Heart right ventricle (tissue), 16 donors: ENCODE measurements at regions of chr12 and their contacts with region 1.

Region 1: GRCh38 chr12:8823565-8824300 is 1.3 kb downstream of the A2ML1 start:
- DNase-seq: peak in 1 of 2 donors; percentile 9
- ATAC-seq: peak in 5 of 8 donors; percentile 34 to 67 (median 51)
- H3K4me3 ChIP-seq: no peak overlapping the region
- H3K27ac ChIP-seq: no peak overlapping the region
- H3K4me1 ChIP-seq: no peaks in the 10 kb centered on the region
- H3K27me3 ChIP-seq: no peaks in the 10 kb centered on the region
- CTCF ChIP-seq: peak in 8 of 9 donors; percentile 40 to 70 (median 59)

Region 2: DNA sequence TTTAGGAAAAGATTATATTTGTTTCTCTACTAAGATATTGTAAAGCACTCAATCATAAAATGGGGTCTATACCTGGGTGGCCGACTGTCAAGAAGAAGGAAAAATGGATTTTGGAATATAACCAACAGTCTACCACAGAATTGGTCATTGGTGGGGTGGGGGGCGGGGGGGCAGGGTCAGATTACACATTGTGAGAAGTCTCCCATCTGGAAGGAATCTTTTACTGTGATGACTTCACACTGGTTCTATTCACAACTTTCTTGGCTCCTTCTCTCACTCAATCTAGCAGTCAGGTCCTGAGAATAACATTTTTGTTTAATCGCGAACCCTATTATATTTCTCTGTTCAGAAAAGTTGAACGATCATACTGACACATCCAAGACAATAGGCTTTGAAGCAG is 274.4 kb before region 1 on chr12:
- intact Hi-C with region 1: loop called in 1 of 10 experiments (anchors 5 kb)
- DNase-seq: no peak
- ATAC-seq: no peak
- H3K4me3 ChIP-seq: no peak overlapping the region
- H3K27ac ChIP-seq: no peak overlapping the region
- H3K4me1 ChIP-seq: peaks cover 0 to 5% (median 0%) of the 10 kb centered on the region in 9 donors
- H3K27me3 ChIP-seq: peaks cover 0 to 5% (median 0%) of the 10 kb centered on the region in 7 donors
- CTCF ChIP-seq: no peak

Region 3: DNA sequence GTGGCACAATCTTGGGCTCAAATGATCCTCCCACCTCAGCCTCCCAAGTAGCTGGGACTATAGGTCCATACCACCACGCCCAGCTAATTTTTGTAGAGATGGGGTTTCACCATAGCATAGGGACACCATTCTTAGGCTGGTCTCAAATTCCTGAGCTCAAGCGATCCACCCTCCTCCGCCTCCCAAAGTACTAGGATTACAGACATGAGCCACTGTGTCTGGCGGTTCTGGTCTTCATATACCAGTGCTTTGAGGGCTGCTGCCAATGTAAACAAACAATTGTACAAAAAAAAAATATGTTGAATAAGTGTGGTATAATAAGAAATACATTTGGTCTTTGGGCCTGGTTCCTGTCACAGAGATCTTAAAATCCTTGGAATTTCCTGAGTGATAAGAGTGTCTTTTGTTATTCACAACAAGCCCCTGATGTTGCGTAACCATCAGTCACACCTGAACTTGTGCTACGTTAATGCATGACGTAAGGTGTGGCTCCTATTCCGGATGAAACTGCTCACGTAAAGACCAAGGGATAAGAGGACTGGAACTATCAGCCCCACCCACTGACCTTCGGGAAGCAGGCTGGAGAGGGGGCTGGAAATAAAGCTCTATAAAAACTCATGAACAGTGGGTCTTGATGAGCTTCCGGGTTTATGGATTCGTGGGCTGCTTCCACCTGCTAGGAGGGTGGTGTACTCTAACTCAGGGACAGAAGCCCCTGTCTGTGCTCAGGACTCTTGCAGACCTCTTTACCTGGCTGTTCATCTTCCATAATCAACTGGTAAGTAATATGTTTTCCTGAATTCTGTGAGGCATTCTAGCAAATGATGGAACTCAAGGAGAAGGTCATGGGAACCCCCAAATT is 142.5 kb before region 1 on chr12:
- intact Hi-C with region 1: loop called in 5 of 10 experiments (anchors 1 to 10 kb)
- DNase-seq: peak in 1 of 2 donors; percentile 32
- ATAC-seq: peak; percentile 27 to 91 (median 79)
- H3K4me3 ChIP-seq: peak overlapping the region in 4 of 10 donors; percentile 16 to 28 (median 24)
- H3K27ac ChIP-seq: peak overlapping the region in 9 of 10 donors; percentile 20 to 75 (median 61)
- H3K4me1 ChIP-seq: peaks cover 0 to 25% (median 6%) of the 10 kb centered on the region in 9 donors
- H3K27me3 ChIP-seq: no peaks in the 10 kb centered on the region
- CTCF ChIP-seq: no peak

Region 4: DNA sequence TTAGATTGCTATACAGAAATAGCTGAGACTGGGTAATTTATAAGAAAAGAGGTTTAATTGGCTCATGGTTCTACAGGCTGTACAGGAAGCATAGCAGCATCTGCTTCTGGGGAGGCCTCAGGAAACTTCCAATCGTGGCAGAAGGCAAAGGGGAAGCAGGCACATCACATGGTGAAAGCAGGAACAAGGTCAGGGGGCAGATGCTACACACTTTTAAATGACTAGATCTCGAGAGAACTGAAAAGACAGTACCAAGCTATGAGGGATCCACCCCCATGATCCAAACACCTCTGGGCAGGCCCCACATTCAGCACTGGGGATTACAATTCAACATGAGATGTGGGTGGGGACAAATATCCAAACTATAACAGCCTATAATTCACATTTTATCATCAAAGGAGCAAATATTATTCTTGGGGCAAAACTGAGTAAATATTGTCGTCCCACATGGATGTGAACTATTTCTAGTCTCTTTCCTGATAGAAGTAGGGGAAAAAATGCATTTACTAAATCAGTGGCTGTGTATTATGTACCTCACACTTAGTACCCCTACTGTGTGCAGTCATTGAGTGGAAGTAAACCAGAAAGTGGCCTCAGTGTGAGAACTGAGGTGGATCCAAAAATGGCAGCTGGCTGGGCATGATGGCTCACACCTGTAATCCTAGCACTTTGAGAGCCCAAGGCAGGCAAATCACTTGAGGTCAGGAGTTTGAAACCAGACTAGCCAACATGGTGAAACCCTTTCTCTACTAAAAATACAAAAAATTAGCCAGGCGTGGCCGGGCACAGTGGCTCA is 26.7 kb before region 1 on chr12:
- intact Hi-C with region 1: no loop called
- DNase-seq: no peak
- ATAC-seq: no peak
- H3K4me3 ChIP-seq: no peak overlapping the region
- H3K27ac ChIP-seq: no peak overlapping the region
- H3K4me1 ChIP-seq: no peaks in the 10 kb centered on the region
- H3K27me3 ChIP-seq: no peaks in the 10 kb centered on the region
- CTCF ChIP-seq: no peak

Region 5: DNA sequence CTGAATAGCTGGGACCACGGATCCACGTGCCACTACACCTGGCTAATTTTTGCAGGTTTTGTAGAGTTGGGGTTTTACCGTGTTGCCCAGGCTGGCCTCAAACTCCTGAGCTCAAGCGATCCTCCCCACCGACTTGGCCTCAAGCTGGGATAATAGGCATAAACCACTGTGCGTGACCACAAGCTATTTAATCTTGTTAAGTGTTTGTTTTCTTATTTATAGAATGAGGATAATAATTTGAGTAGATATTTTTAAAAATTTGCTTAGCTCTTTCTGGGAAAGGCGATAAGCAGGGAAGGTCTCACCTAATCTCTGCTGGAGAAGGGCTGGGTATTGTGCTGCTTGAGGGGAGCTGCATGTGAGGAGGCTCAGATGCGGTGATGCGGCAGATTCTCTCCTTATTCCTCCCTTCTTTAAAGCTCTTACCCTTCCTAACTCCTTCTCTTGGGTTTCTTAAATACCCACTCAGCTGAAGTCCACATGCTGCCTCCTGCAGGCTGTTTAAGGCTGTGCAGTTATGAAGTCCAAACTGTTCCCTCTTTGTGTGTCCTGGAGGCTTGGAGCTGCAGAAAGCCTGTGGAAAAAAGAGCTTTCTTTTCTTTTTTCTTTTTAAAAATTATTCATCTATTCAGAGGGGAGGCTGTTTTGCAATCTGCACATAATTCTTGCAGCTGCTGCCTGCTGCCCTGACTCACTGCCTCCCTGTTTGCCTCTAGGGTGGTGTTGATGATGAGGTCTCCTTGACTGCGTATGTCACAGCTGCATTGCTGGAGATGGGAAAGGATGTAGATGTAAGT is 36.6 kb after region 1 on chr12:
- intact Hi-C with region 1: no loop called
- DNase-seq: peak; percentile 13 to 32
- ATAC-seq: peak in 6 of 8 donors; percentile 41 to 73 (median 70)
- H3K4me3 ChIP-seq: no peak overlapping the region
- H3K27ac ChIP-seq: no peak overlapping the region
- H3K4me1 ChIP-seq: no peaks in the 10 kb centered on the region
- H3K27me3 ChIP-seq: no peaks in the 10 kb centered on the region
- CTCF ChIP-seq: peak; percentile 32 to 75 (median 66)